Caco-2 (cell line): ENCODE measurements at regions of chr9 and their contacts with region 1.

Region 1: GRCh38 chr9:111597817-111598729 is 1.4 kb downstream of the PTGR1 start:
- DNase-seq: peak; percentile 76 to 77
- H3K4me3 ChIP-seq: peak overlapping the region; percentile 61
- H3K4me3 Mint-ChIP-seq: peak overlapping the region; percentile 78
- H3K27ac Mint-ChIP-seq: peak overlapping the region; percentile 80
- H3K4me1 ChIP-seq: peaks cover 17% of the 10 kb centered on the region
- H3K4me1 Mint-ChIP-seq: peaks cover 12% of the 10 kb centered on the region
- H3K27me3 ChIP-seq: no peaks in the 10 kb centered on the region
- H3K27me3 Mint-ChIP-seq: no peaks in the 10 kb centered on the region
- CTCF ChIP-seq: peak; percentile 80 to 84

Region 2: DNA sequence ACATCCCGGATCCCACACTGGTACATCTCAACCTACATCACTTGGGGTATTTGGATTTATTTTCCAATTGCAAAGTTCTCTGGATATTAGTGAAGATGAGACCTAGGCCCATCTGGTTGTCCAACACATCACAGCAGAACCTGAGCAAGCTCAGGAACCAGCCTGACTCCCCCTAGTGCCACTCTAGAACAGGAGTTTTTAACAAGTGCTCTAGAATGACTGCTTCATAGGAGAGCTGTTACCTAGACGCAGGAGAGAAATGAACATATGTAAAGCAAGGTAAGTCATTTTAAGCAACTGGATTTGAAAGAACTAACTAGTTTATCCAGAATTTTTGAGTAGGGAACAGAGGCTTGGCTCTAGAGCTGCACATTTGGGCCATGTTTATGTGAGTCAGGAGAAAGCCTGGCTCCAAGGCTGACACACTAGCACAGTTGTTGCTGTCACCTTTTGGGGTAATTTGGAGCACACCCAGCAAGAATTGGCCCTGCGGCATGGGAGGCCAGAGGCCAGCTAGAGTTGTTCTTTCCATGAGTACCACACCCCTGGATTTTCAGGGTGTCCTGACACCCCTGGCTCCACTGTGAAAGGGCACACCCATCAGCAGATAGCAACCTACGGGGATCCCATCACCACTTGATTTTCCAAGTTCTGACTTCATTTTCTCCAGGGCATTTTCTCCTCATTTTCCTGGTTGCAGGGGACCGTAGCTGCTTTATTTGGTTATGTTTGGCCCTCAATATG is 448.9 kb before region 1 on chr9:
- CTCF ChIA-PET with region 1: no interaction called
- POLR2A ChIA-PET with region 1: no interaction called
- intact Hi-C with region 1: no loop called
- DNase-seq: peak in 1 of 2 experiments; percentile 8
- H3K4me3 ChIP-seq: no peak overlapping the region
- H3K4me3 Mint-ChIP-seq: no peak overlapping the region
- H3K27ac Mint-ChIP-seq: no peak overlapping the region
- H3K4me1 ChIP-seq: no peaks in the 10 kb centered on the region
- H3K4me1 Mint-ChIP-seq: no peaks in the 10 kb centered on the region
- H3K27me3 ChIP-seq: no peaks in the 10 kb centered on the region
- H3K27me3 Mint-ChIP-seq: peaks cover 6% of the 10 kb centered on the region
- CTCF ChIP-seq: peak in 1 of 2 experiments; percentile 28

Region 3: DNA sequence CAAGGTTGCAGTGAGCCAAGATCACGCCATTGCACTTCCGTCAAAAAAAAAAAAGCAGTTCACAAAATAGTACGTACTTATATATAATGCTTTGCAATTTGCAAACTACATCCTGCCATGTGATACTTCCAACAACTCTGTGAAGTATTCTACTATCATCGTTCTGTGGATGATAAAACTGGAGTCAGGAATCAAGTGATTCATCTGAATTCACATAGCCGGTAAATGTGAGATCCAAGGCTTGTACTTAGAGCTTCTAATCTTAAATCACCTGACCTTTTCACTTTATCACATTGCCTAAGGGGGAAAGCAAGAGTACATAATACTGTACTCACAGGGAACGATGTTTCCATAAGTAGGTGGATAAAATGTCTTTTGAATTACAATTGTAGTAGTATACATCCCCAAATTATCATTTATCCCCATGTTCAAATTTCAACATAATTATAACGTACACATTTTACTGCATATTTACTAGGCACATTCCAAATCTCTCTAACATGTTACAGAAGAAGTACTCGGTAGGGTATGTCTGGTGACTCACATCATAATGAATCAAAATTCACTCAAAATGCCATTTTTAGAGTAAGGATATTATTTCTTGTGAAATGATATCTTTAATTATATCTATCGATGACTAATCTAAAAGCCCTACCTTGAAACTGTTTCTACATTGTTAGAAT is 347.1 kb before region 1 on chr9:
- CTCF ChIA-PET with region 1: no interaction called
- POLR2A ChIA-PET with region 1: no interaction called
- intact Hi-C with region 1: no loop called
- DNase-seq: no peak
- H3K4me3 ChIP-seq: no peak overlapping the region
- H3K4me3 Mint-ChIP-seq: no peak overlapping the region
- H3K27ac Mint-ChIP-seq: no peak overlapping the region
- H3K4me1 ChIP-seq: no peaks in the 10 kb centered on the region
- H3K4me1 Mint-ChIP-seq: no peaks in the 10 kb centered on the region
- H3K27me3 ChIP-seq: no peaks in the 10 kb centered on the region
- H3K27me3 Mint-ChIP-seq: peaks cover 5% of the 10 kb centered on the region
- CTCF ChIP-seq: no peak

Region 4: DNA sequence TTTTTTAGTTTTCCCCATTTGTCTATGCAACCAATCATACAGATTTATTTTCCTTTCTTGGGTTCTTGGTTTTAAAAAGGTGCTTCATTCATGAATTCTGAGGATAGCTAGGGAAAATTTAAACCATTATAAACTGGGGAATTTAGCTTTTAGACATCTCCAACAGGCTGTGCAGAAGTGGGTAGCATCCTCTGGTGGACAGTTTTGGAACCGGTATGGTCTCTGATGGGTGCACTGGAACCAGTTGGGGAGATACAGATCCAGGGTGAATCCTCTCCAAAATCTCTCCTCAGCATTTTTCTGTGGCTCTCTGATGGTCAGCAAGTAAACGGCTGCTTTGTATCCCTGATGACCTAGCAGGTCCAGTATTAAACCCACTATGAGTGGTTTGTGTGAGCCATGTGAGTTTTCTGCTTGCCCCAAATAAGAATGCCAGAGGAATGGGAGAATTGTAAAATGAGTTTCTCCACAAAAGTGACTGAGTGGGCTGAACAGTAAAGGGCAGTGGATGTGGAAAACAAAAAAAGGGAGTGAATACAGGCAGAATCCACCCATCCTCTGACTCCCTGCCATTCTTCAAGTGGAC is 23.9 kb after region 1 on chr9:
- CTCF ChIA-PET with region 1: interaction called, 26 read pairs
- POLR2A ChIA-PET with region 1: interaction called, 3 read pairs
- intact Hi-C with region 1: loop called (anchors 1 kb)
- DNase-seq: peak; percentile 63 to 64
- H3K4me3 ChIP-seq: no peak overlapping the region
- H3K4me3 Mint-ChIP-seq: no peak overlapping the region
- H3K27ac Mint-ChIP-seq: no peak overlapping the region
- H3K4me1 ChIP-seq: no peaks in the 10 kb centered on the region
- H3K4me1 Mint-ChIP-seq: no peaks in the 10 kb centered on the region
- H3K27me3 ChIP-seq: no peaks in the 10 kb centered on the region
- H3K27me3 Mint-ChIP-seq: no peaks in the 10 kb centered on the region
- CTCF ChIP-seq: peak; percentile 75 to 94